K562 (cell line): ENCODE measurements at regions of chr3 and their contacts with region 1.

Region 1: DNA sequence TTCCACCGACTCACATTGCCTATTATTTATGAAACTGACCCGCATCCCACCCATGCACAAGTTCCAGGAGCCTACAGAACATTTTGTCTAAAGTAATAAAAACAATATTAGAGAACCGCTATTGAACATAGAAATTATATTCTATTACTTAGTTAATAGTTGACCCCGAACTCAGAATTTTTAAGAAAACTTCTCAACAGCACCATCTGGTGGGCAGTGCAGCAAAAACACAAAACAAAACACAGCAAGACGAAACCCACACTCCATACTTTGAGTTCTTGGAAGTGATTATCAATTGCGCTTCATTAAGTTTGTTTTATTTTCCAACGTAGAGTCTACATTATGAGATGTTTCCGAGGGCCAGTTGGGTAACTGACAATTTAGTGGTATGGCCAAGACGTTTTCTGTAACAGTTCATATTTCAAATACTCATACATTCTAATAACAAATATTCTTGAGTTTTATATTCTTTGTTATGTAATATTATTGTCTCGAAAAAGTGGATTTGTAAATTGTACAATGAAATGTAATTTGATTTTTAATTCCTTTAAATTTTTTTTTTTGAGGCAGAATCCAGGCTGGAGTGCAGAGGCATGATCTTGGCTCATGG is 24.0 kb upstream of the C3orf70 start:
- DNase-seq: peak; percentile 24 to 66 (median 35)
- ATAC-seq: peak; percentile 39; the same call in 1 of the 3 replicates
- H3K4me3 ChIP-seq: no peak overlapping the region
- H3K27ac ChIP-seq: no peak overlapping the region
- H3K4me1 ChIP-seq: peaks cover 7 to 13% of the 10 kb centered on the region in 2 experiments; a peak in 4 of 5 replicates
- H3K27me3 ChIP-seq: peaks cover 8 to 13% of the 10 kb centered on the region in 2 experiments; a peak in 4 of 5 replicates
- CTCF ChIP-seq: peak; percentile 49 to 72 (median 65); a peak in 5 of 6 replicates
- EP300 ChIP-seq: no peak
- POLR2A ChIP-seq: no peak
- RAD21 ChIP-seq: peak; percentile 72 to 77

Region 2: GRCh38 chr3:184965639-184966430 is 211.0 kb before region 1 on chr3:
- CTCF ChIA-PET with region 1: no interaction called
- POLR2A ChIA-PET with region 1: no interaction called
- in situ Hi-C with region 1: no loop called
- intact Hi-C with region 1: loop called (anchors 5 kb)
- DNase-seq: peak in 1 of 4 experiments; percentile 10
- ATAC-seq: peak; percentile 56; the same call in 2 of the 3 replicates
- H3K4me3 ChIP-seq: no peak overlapping the region
- H3K27ac ChIP-seq: no peak overlapping the region
- H3K4me1 ChIP-seq: no peaks in the 10 kb centered on the region
- H3K27me3 ChIP-seq: no peaks in the 10 kb centered on the region
- CTCF ChIP-seq: no peak
- EP300 ChIP-seq: no peak
- POLR2A ChIP-seq: no peak
- RAD21 ChIP-seq: peak in 1 of 2 experiments; percentile 43; a peak in 1 of 4 replicates

Region 3: DNA sequence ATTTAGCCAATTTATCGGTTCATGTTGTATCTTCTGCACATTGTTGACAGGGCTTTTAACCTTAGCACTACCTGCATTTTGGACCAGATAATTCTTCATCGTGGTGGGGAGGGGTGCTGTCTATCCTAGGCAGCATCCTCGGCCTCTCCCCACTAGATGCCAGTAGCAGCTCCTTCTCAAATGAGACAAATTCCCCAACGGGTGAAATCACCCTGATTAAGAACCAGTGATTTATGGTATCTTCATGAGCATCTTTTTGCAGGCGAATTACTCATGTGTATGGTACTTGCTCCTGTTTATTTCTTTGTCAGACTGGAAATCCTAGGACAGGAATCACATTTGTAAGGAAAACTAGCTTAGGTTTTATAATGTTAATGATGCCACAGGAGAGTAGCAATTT is 92.0 kb before region 1 on chr3:
- CTCF ChIA-PET with region 1: no interaction called
- POLR2A ChIA-PET with region 1: no interaction called
- in situ Hi-C with region 1: no loop called
- intact Hi-C with region 1: loop called (anchors 5 kb)
- DNase-seq: no peak
- ATAC-seq: no peak
- H3K4me3 ChIP-seq: no peak overlapping the region
- H3K27ac ChIP-seq: no peak overlapping the region
- H3K4me1 ChIP-seq: no peaks in the 10 kb centered on the region; a peak in 1 of 5 replicates
- H3K27me3 ChIP-seq: peaks cover 20 to 36% of the 10 kb centered on the region in 2 experiments
- CTCF ChIP-seq: no peak
- EP300 ChIP-seq: no peak
- POLR2A ChIP-seq: no peak
- RAD21 ChIP-seq: no peak

Region 4: GRCh38 chr3:185120171-185120570 is 56.7 kb before region 1 on chr3:
- CTCF ChIA-PET with region 1: no interaction called
- POLR2A ChIA-PET with region 1: no interaction called
- in situ Hi-C with region 1: no loop called
- intact Hi-C with region 1: no loop called
- DNase-seq: no peak
- ATAC-seq: no peak
- H3K4me3 ChIP-seq: no peak overlapping the region
- H3K27ac ChIP-seq: no peak overlapping the region
- H3K4me1 ChIP-seq: no peaks in the 10 kb centered on the region
- H3K27me3 ChIP-seq: peaks cover 6 to 25% of the 10 kb centered on the region in 2 experiments; a peak in 4 of 5 replicates
- CTCF ChIP-seq: no peak
- EP300 ChIP-seq: no peak
- POLR2A ChIP-seq: no peak
- RAD21 ChIP-seq: no peak